ENCODE measurements at regions of chr12 and their contacts with region 1.

Region 1: DNA sequence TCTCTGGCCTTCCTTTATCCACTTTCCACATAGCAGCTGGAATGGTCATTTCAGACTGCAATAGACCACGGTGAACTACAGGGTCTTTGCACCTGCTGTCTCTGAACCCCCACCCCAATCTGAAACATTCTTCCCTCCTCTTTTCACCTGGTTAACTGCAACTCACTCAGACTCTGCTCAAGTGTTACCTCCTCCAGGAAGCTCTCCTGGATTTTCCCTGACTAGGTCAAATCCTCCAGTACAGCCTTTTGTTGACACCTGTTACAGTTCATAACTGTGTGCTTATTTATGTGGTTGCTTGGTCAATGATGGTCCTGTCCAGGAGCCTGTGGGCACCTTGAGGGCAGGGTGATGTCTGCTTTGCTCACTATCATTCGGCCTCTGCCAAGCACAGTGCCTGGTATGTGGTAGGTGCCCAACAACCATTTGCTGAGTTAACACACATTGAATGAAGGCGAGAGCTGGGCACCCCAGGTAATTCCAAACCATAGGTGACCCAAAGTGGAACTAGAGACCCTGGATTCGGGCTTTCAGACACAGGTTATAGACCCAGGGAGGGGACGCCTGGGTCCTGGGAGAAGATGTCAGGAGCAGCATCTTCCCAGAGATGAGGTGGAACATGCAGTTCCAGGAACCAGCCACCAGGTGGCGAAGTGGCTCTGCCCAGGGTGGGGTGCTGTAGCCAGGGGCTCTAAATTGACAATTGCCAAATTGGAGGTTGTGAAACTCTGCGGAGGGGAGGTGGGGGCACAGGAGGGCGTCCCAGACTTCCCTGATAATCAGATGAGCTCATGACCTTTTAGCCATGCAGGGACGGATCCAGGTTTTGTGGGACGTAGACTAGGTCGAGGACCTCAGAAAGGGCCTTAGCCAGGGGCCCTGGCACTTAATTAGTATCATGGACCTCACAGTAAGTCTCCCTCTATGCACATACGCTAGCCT is 28.1 kb downstream of the TRPV4 start:
- DNase-seq: peak; percentile 87
- CTCF ChIP-seq: peak; percentile 92

Region 2: GRCh38 chr12:109625131-109625559 is 179.9 kb before region 1 on chr12:
- CTCF ChIA-PET with region 1: no interaction called
- POLR2A ChIA-PET with region 1: no interaction called
- DNase-seq: no peak
- CTCF ChIP-seq: no peak

Region 3: GRCh38 chr12:109713187-109713984 is 91.7 kb before region 1 on chr12 and contains the start of gene FAM222A:
- CTCF ChIA-PET with region 1: no interaction called
- POLR2A ChIA-PET with region 1: no interaction called
- DNase-seq: peak; percentile 96
- CTCF ChIP-seq: no peak

Region 4: GRCh38 chr12:109782326-109782703 is 22.8 kb before region 1 on chr12:
- CTCF ChIA-PET with region 1: interaction called, 10 read pairs
- POLR2A ChIA-PET with region 1: no interaction called
- DNase-seq: no peak
- CTCF ChIP-seq: no peak

Measured in GM10248 (cell line).